ENCODE measurements at regions of chr12 and their contacts with region 1.

Region 1: GRCh38 chr12:12999959-13000615 is at the start of gene HEBP1:
- DNase-seq: peak; percentile 96
- H3K4me3 ChIP-seq: peak within 1 kb of the TSS; percentile 61 to 73
- H3K27ac ChIP-seq: peak within 1 kb of the TSS; percentile 90 to 99
- H3K4me1 ChIP-seq: no peaks in the 10 kb centered on the region
- H3K27me3 ChIP-seq: no peaks in the 10 kb centered on the region
- CTCF ChIP-seq: no peak
- POLR2A ChIP-seq: peak; percentile 87 to 98
- total RNA-seq, gene HEBP1: 10.5 to 64.4 (median 40.9) TPM

Region 2: GRCh38 chr12:12835378-12836145 is 164.5 kb before region 1 on chr12:
- intact Hi-C with region 1: no loop called
- DNase-seq: no peak
- H3K4me3 ChIP-seq: no peak overlapping the region
- H3K27ac ChIP-seq: peak overlapping the region in 1 of 2 donors; percentile 15
- H3K4me1 ChIP-seq: no peaks in the 10 kb centered on the region
- H3K27me3 ChIP-seq: no peaks in the 10 kb centered on the region
- CTCF ChIP-seq: no peak
- POLR2A ChIP-seq: no peak

Region 3: DNA sequence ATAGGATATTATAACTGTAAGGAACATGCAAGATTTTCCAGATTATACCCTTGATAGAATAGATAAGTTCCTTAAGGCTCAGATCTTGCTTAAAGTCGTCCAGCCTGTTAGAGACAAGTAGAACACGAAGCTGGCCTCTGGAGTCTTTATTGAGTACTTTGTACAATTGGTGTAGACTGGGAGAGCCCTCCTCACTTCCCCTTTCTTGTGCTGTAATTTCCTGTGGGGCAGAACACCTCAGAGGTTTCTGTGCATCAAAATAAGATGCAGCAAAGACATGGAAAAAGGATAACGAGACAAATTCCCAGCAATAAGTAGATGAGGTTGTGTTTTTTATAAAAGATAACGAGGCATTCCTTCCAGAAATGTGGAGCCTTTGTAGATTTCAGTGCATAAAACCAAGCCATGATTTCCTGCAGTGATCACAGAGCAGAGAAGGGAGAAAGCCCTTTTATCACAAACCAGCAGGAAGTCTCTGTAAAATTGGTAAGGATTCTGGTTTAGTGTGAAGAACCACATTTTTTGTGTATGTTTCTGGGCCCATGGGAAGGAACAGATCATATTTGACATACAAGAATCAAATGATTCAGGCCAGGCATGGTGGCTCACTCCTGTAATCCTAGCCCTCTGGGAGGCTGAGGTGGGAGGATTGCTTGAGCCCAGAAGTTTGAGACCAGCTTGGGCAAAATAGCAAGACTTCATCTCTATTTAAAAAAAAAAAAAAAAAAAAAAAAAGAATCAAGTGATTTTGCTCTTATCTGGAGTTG is 90.7 kb before region 1 on chr12:
- intact Hi-C with region 1: loop called (anchors 5 kb)
- DNase-seq: no peak
- H3K4me3 ChIP-seq: no peak overlapping the region
- H3K27ac ChIP-seq: peak overlapping the region; percentile 71 to 90
- H3K4me1 ChIP-seq: no peaks in the 10 kb centered on the region
- H3K27me3 ChIP-seq: no peaks in the 10 kb centered on the region
- CTCF ChIP-seq: no peak
- POLR2A ChIP-seq: no peak

Region 4: DNA sequence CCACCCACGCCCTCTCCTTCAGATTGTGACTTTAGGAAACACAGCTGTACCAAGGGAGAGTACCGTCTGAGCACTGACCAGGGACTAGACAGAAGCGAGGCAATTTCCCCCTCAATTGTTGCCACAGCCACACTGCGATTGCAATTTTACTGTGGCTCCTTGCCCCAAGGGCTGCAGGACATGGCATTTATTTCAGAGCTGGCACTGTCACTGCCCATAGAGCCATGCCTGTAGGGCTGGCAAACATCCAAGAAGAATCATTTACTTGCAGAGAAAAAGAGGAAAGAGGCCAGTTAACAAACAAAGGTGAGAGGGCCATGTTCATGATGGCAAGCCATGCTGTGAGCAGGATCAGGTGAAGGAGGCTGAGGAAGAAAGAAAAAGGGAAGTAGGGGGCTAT is 326.0 kb after region 1 on chr12:
- intact Hi-C with region 1: no loop called
- DNase-seq: no peak
- H3K4me3 ChIP-seq: no peak overlapping the region
- H3K27ac ChIP-seq: no peak overlapping the region
- H3K4me1 ChIP-seq: no peaks in the 10 kb centered on the region
- H3K27me3 ChIP-seq: no peaks in the 10 kb centered on the region
- CTCF ChIP-seq: no peak
- POLR2A ChIP-seq: no peak